HepG2 (cell line): ENCODE measurements at regions of chr2 and their contacts with region 1.

Region 1: GRCh38 chr2:206480161-206480560 is 36.8 kb downstream of the ADAM23 start:
- DNase-seq: no peak
- ATAC-seq: no peak
- H3K4me3 ChIP-seq: no peak overlapping the region
- H3K27ac ChIP-seq: no peak overlapping the region
- H3K4me1 ChIP-seq: no peaks in the 10 kb centered on the region
- H3K27me3 ChIP-seq: no peaks in the 10 kb centered on the region
- CTCF ChIP-seq: no peak
- EP300 ChIP-seq: no peak
- POLR2A ChIP-seq: no peak
- RAD21 ChIP-seq: no peak

Region 2: GRCh38 chr2:206432432-206433082 is 47.6 kb before region 1 on chr2:
- CTCF ChIA-PET with region 1: no interaction called
- POLR2A ChIA-PET with region 1: no interaction called
- in situ Hi-C with region 1: no loop called
- intact Hi-C with region 1: loop called (anchors 1 kb)
- DNase-seq: no peak
- ATAC-seq: no peak
- H3K4me3 ChIP-seq: no peak overlapping the region
- H3K27ac ChIP-seq: no peak overlapping the region
- H3K4me1 ChIP-seq: peaks cover 13% of the 10 kb centered on the region
- H3K27me3 ChIP-seq: no peaks in the 10 kb centered on the region; a peak in 1 of 5 replicates
- CTCF ChIP-seq: no peak
- EP300 ChIP-seq: no peak
- POLR2A ChIP-seq: no peak
- RAD21 ChIP-seq: no peak

Region 3: GRCh38 chr2:206515580-206515979 is 35.4 kb after region 1 on chr2:
- CTCF ChIA-PET with region 1: no interaction called
- POLR2A ChIA-PET with region 1: no interaction called
- in situ Hi-C with region 1: no loop called
- intact Hi-C with region 1: no loop called
- DNase-seq: no peak
- ATAC-seq: no peak
- H3K4me3 ChIP-seq: no peak overlapping the region
- H3K27ac ChIP-seq: no peak overlapping the region
- H3K4me1 ChIP-seq: no peaks in the 10 kb centered on the region
- H3K27me3 ChIP-seq: no peaks in the 10 kb centered on the region
- CTCF ChIP-seq: no peak
- EP300 ChIP-seq: no peak
- POLR2A ChIP-seq: no peak
- RAD21 ChIP-seq: no peak